Pancreas (tissue), 10 donors: ENCODE measurements at regions of chr7 and their contacts with region 1.

Region 1: DNA sequence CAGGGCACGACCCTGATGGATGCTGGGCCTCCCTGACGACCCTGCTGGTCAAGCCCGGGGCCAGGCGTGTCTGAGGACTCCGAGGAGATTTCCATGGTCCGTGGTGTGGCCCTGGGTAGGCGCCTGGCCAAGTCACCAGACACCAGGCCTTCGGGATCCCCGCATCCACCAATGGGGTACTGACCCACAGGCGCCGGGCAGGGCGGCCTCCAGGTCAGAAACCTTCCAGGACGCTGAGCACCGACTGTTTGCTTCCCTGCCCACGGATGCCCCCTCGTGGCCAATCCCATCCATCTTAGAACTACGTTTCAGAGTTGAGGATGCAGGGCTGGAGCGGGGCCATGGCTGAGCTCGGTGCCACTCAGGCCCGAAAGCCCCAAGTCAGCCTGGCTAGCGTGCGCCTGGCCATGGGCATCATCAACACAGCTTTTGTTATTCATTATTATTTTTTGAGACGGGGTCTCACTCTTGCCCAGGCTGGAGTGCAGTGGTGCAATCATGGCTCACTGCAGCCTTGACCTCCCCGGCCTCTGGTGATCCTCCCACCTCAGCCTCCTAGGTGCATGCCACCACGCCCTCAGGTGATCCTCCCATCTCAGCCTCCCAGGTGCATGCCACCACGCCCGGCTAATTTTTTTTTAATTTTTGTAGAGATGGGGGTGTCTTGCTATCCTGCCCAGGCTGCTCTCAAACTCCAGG is 7.1 kb upstream of the AMZ1 start:
- DNase-seq: peak; percentile 66 to 92 (median 85)
- ATAC-seq: peak; percentile 80 to 91 (median 85)
- H3K4me3 ChIP-seq: no peak overlapping the region
- H3K27ac ChIP-seq: no peak overlapping the region
- H3K4me1 ChIP-seq: no peaks in the 10 kb centered on the region
- H3K27me3 ChIP-seq: peaks cover 0 to 2% (median 0%) of the 10 kb centered on the region in 4 donors
- CTCF ChIP-seq: peak; percentile 35 to 65 (median 55)

Region 2: DNA sequence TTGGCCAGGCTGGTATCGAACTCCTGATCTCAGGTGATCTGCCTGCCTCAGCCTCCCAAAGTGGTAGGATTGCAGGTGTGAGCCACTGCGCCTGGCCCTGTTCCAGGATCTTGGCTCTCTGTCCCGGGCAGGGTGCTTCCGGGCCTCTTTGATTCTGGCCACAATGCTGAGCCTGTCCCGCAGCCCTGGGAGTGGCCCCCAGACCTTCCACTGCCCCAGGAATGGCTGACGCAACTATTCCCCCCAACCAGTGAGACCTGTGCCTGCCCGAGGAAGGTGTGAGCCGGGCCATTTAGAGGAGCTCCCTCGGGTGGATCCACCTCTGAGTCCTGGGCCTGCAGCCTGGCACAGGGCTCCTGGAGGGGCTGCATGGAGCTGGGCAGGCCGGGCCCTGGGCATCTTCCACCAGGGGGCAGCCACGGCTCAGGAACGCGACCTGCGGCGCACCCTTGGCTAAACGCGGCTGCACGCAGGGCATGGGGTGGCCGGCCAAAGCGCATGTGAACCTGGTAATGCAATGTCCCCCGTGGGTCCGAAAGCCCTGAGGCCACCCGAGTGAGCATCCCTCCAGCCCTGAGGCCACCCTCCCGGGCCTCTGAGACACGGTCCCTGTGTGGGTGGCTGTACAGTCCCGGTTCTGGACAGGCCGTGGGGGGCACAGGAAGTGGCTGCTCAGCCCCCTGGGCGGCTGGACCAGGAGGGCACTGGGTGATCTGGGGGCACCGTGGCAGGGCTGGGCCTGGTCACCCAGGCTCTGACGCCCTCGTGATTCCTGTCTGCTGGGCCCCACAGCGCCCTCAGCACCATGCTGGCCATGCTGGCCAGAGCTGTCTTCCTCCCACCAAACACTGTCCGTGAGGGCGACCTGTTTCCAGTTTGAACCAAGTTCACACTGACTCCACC is 229.5 kb before region 1 on chr7:
- intact Hi-C with region 1: loop called in 1 of 3 experiments (anchors 10 kb)
- DNase-seq: peak; percentile 72 to 97 (median 87)
- ATAC-seq: peak; percentile 97 to 99 (median 98)
- H3K4me3 ChIP-seq: peak overlapping the region in 3 of 4 donors; percentile 15 to 35 (median 31)
- H3K27ac ChIP-seq: no peak overlapping the region
- H3K4me1 ChIP-seq: peaks cover 0 to 5% (median 0%) of the 10 kb centered on the region in 3 donors
- H3K27me3 ChIP-seq: no peaks in the 10 kb centered on the region
- CTCF ChIP-seq: peak; percentile 84 to 87 (median 86)

Region 3: GRCh38 chr7:2477447-2478398 is 203.2 kb before region 1 on chr7:
- intact Hi-C with region 1: loop called in 1 of 3 experiments (anchors 10 kb)
- DNase-seq: peak; percentile 41 to 87 (median 66)
- ATAC-seq: peak; percentile 82 to 92 (median 86)
- H3K4me3 ChIP-seq: no peak overlapping the region
- H3K27ac ChIP-seq: no peak overlapping the region
- H3K4me1 ChIP-seq: peaks cover 7 to 16% (median 12%) of the 10 kb centered on the region in 3 donors
- H3K27me3 ChIP-seq: no peaks in the 10 kb centered on the region
- CTCF ChIP-seq: peak; percentile 56 to 79 (median 70)